Gastrocnemius medialis (tissue), 4 donors: ENCODE measurements at regions of chr18 and their contacts with region 1.

Region 1: DNA sequence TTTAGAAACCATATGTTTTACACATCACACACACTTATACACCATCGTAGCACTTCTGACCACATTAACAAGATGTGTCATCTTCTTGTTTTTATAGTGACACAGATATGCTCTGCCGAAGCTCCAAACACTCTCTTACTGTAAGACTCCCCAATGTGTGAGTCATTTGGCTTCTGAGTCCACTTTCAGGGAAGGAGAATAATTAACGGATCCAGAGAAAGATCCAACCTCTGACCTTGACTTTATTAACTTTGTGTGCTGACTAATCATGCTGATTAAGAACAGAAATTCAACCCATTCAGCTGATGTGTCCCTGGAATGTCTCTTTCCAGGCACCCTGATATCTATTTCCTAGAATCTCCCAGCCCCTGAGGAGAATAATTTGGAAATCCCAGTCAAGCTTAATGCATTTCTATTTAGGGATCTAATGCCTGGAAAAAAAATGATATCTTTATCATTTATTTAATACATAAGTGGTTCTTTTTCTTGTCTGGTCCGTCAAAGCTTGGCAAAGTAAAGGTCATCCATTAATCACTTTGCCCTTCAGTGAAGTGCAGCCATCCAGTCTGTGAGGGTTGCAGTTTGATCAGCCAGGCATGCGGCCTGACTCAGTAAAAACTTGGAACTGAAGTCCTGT is 615.8 kb upstream of the SYT4 start:
- DNase-seq: no peak
- ATAC-seq: peak in 1 of 2 donors; percentile 60
- H3K4me3 ChIP-seq: no peak overlapping the region
- H3K27ac ChIP-seq: no peak overlapping the region
- H3K4me1 ChIP-seq: no peaks in the 10 kb centered on the region
- H3K27me3 ChIP-seq: no peaks in the 10 kb centered on the region
- CTCF ChIP-seq: no peak
- POLR2A ChIP-seq: no peak

Region 2: DNA sequence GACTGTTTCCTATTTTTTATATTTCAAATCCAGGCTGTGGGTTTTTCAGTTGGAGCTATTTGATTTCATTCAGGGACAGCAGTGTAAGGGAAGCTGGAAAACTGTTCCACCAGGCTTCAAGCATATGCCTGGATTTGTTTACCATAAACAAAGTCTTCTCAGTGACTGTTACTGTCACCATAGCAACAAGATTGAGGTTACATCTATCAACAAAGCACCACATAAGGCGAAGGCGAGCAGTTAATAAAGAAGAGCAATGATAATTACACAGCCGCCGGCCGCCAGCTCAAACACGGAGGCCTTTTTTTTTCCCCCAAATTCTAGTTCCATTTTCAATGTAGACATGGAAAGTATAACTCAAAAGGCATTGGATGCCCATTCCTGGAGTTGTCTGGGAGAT is 62.2 kb before region 1 on chr18:
- in situ Hi-C with region 1: no loop called
- intact Hi-C with region 1: loop called (anchors 2 kb)
- DNase-seq: no peak
- ATAC-seq: no peak
- H3K4me3 ChIP-seq: no peak overlapping the region
- H3K27ac ChIP-seq: no peak overlapping the region
- H3K4me1 ChIP-seq: peaks cover 5 to 15% of the 10 kb centered on the region in 2 donors
- H3K27me3 ChIP-seq: no peaks in the 10 kb centered on the region
- CTCF ChIP-seq: no peak
- POLR2A ChIP-seq: no peak

Region 3: GRCh38 chr18:44423814-44424644 is 530.9 kb after region 1 on chr18:
- in situ Hi-C with region 1: no loop called
- intact Hi-C with region 1: no loop called
- DNase-seq: no peak
- ATAC-seq: no peak
- H3K4me3 ChIP-seq: no peak overlapping the region
- H3K27ac ChIP-seq: no peak overlapping the region
- H3K4me1 ChIP-seq: no peaks in the 10 kb centered on the region
- H3K27me3 ChIP-seq: no peaks in the 10 kb centered on the region
- CTCF ChIP-seq: no peak
- POLR2A ChIP-seq: no peak